ENCODE measurements at regions of chr5 and their contacts with region 1.

Region 1: GRCh38 chr5:177419051-177419450 is 7.4 kb upstream of the GRK6 start:
- DNase-seq: no peak
- H3K4me3 ChIP-seq: no peak overlapping the region
- H3K27ac ChIP-seq: no peak overlapping the region
- H3K4me1 ChIP-seq: peaks cover 0 to 11% (median 0%) of the 10 kb centered on the region in 4 donors
- H3K27me3 ChIP-seq: no peaks in the 10 kb centered on the region
- CTCF ChIP-seq: no peak
- EP300 ChIP-seq: no peak
- POLR2A ChIP-seq: no peak

Region 2: DNA sequence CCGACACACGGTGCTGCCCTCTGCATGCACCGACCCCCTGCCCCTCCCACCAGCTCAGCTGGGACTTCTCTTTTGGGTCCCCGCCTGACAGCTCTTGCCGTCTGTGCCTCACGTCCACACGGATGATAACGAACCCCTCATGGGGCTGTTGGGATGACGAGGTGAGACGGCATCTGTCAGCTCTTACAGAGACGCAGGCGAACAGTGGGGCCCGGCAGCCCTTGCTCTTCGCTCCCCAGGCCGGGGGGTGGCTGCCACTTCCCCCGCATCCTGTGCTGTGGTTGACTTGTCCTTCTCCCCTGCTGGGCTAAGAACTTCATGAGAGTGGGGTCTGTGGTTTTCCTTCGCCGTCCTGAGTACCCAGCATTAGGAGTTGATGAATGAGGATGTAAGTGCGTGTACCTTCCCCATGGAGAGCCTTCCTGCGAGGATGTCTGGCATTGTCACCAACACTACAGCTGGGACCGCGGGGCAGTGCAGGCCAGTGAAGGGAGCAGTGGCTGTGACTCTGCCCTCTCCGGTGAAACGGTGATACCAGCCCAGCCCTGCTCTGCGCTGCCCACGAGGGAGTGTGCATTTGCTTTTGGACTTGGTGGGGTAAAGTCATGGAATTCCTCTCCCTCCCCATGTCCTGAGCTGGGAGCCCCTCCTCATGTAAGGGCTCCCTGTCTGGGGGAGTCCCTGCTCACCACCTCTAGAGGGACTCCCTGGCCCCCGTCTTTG is 543.1 kb before region 1 on chr5:
- in situ Hi-C with region 1: no loop called
- intact Hi-C with region 1: no loop called
- DNase-seq: no peak
- H3K4me3 ChIP-seq: no peak overlapping the region
- H3K27ac ChIP-seq: no peak overlapping the region
- H3K4me1 ChIP-seq: no peaks in the 10 kb centered on the region
- H3K27me3 ChIP-seq: peaks cover 54% of the 10 kb centered on the region
- CTCF ChIP-seq: no peak
- EP300 ChIP-seq: no peak
- POLR2A ChIP-seq: no peak

Region 3: GRCh38 chr5:177025101-177025601 is 393.9 kb before region 1 on chr5:
- in situ Hi-C with region 1: no loop called
- intact Hi-C with region 1: no loop called
- DNase-seq: no peak
- H3K4me3 ChIP-seq: no peak overlapping the region
- H3K27ac ChIP-seq: no peak overlapping the region
- H3K4me1 ChIP-seq: peaks cover 4 to 29% (median 16%) of the 10 kb centered on the region in 4 donors
- H3K27me3 ChIP-seq: no peaks in the 10 kb centered on the region
- CTCF ChIP-seq: no peak
- EP300 ChIP-seq: no peak
- POLR2A ChIP-seq: no peak

Region 4: DNA sequence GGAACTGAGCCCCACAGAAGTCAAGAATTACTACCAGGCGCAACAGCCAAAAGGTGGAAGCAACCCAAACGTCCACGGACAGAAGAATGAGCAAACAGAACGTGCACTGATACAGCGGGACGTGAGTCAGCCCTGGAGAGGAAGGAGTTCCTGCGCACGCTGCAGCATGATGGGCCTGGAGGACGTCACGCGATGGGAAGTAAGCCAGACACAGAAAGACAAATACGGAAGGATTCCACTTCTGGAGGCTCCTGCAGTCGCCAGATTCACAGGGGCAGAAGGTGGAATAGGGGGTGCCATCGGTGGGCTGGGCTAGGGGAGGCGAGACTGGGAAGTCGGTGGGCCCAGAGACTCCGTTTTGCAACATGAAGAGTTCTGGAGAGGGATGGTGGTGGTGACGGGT is 893.8 kb after region 1 on chr5:
- in situ Hi-C with region 1: no loop called
- intact Hi-C with region 1: loop called (anchors 5 kb)
- DNase-seq: peak; percentile 33
- H3K4me3 ChIP-seq: no peak overlapping the region
- H3K27ac ChIP-seq: peak overlapping the region in 1 of 4 donors; percentile 33
- H3K4me1 ChIP-seq: no peaks in the 10 kb centered on the region
- H3K27me3 ChIP-seq: no peaks in the 10 kb centered on the region
- CTCF ChIP-seq: no peak
- EP300 ChIP-seq: no peak
- POLR2A ChIP-seq: no peak

Measured in transverse colon (tissue), 4 donors.